Activated T-helper 1 cell treated with anti-CD3 and anti-CD28 coated beads, Interleukin-12 subunit alpha, Interleukin-12 subunit beta, Interleukin-2, Interleukin-4 antibody, amounts not matched to agents 30 ng/mL and 10 ng/mL and 1 ng/mL, durations not matched to agents 14 hours and 24 hours and 36 hours (primary cell): ENCODE measurements at regions of chr22 and their contacts with region 1.

Region 1: GRCh38 chr22:30667494-30668385 is at the start of gene DUSP18:
- DNase-seq: peak; percentile 92
- H3K4me3 Mint-ChIP-seq: peak within 1 kb of the TSS; percentile 93
- H3K27ac Mint-ChIP-seq: peak within 1 kb of the TSS; percentile 83
- H3K4me1 Mint-ChIP-seq: peaks cover 32% of the 10 kb centered on the region
- H3K27me3 Mint-ChIP-seq: peaks cover 7% of the 10 kb centered on the region
- total RNA-seq, gene DUSP18: 9.6 and 9.8 TPM in 2 replicates

Region 2: GRCh38 chr22:30649430-30650007 is 18.2 kb before region 1 on chr22:
- intact Hi-C with region 1: loop called (anchors 1 kb)
- DNase-seq: peak; percentile 72
- H3K4me3 Mint-ChIP-seq: peak overlapping the region; percentile 45
- H3K27ac Mint-ChIP-seq: peak overlapping the region; percentile 89
- H3K4me1 Mint-ChIP-seq: peaks cover 47% of the 10 kb centered on the region
- H3K27me3 Mint-ChIP-seq: no peaks in the 10 kb centered on the region